ENCODE measurements at regions of chr12 and their contacts with region 1.

Region 1: DNA sequence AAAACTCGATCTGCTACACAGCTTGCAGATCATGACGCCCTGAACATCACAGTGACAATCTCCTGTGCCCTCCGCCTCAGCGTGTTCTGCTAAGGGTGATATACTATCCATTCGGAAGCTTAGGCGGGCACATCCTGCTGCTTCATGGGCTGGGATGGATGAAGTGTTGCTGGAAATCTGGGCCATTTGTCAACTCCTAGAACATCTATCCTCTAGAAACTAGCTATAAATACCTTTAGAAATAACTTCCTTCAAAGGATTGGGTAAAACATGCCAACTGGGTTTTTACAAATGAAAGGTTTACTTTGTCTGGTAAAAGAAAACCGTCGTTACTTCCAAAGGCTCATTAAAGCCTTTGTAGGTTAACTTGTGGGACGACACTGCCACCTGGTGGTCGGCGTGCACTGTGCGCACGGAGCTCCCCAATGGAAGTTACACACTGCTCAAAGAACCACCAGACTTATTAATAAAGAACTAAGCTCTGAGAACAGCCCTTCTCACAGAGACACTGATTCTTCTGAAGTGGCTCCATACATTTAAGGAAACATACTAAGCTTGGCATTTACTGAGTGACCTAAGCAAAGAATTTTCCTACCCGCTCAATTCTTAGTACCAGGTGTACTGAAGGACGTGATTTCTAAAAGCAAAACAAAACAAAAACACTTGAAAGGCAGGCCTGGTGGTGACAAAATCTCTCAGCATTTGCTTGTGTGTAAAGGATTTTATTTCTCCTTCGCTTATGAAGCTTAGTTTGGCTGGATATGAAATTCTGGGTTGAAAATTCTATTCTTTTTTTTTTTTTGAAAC is 21.6 kb upstream of the CACNA2D4 start:
- DNase-seq: peak; percentile 45
- ATAC-seq: peak; percentile 99
- H3K4me3 ChIP-seq: no peak overlapping the region
- H3K27ac ChIP-seq: no peak overlapping the region
- H3K4me1 ChIP-seq: no peaks in the 10 kb centered on the region
- H3K27me3 ChIP-seq: no peaks in the 10 kb centered on the region
- CTCF ChIP-seq: peak; percentile 87 to 93 (median 92); a peak in 5 of 6 replicates
- EP300 ChIP-seq: no peak
- POLR2A ChIP-seq: no peak
- RAD21 ChIP-seq: peak; percentile 94

Region 2: DNA sequence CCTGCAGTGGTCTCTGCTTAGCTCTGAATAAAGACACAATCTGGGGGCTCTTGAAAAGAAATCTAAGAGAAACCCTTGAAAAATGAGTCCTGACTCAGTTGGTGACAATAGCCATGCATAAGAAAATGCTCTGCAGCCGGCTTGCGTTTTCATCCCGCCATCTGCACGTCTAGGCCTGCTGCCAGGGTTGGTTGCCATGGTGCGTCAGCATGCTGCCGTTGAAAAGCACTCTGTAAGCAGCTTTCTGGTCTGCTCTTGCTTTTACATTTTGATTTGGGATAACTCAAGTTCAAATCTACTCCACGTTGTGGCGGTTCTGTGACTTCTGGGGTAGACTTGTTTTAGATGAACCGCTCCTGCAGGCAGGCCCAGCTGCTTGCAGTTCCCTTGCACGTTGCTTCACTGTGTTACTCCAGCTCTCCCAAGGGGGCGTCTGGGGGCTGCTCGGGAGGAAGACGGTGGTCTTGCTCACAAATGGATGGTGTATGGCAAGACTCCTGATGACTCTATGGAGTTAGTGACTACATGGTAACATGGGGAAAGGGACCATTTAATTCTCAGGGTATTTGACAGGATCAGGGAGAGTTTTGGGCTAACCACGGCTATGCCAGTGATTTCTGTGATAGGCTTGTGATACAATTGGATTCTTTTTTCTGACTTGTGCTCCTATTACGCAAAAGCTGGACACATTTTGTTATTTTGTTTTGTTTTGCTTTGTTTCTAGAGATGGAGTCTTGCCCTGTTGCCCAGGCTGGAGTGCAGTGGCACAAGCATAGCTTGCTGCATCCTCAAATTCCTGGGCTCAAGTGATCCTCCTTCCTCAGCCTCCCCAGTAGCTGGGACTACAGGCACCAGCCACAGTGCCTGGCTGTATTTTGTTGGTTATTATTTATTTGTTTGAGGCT is 295.2 kb before region 1 on chr12:
- CTCF ChIA-PET with region 1: interaction called, 21 read pairs
- POLR2A ChIA-PET with region 1: no interaction called
- RAD21 ChIA-PET with region 1: interaction called, 12 read pairs
- SMC1A ChIA-PET with region 1: interaction called, 9 read pairs
- in situ Hi-C with region 1: loop called (anchors 5 kb)
- intact Hi-C with region 1: no loop called
- DNase-seq: no peak
- ATAC-seq: no peak
- H3K4me3 ChIP-seq: no peak overlapping the region
- H3K27ac ChIP-seq: no peak overlapping the region
- H3K4me1 ChIP-seq: no peaks in the 10 kb centered on the region
- H3K27me3 ChIP-seq: no peaks in the 10 kb centered on the region
- CTCF ChIP-seq: no peak
- EP300 ChIP-seq: no peak
- POLR2A ChIP-seq: no peak
- RAD21 ChIP-seq: no peak

Region 3: DNA sequence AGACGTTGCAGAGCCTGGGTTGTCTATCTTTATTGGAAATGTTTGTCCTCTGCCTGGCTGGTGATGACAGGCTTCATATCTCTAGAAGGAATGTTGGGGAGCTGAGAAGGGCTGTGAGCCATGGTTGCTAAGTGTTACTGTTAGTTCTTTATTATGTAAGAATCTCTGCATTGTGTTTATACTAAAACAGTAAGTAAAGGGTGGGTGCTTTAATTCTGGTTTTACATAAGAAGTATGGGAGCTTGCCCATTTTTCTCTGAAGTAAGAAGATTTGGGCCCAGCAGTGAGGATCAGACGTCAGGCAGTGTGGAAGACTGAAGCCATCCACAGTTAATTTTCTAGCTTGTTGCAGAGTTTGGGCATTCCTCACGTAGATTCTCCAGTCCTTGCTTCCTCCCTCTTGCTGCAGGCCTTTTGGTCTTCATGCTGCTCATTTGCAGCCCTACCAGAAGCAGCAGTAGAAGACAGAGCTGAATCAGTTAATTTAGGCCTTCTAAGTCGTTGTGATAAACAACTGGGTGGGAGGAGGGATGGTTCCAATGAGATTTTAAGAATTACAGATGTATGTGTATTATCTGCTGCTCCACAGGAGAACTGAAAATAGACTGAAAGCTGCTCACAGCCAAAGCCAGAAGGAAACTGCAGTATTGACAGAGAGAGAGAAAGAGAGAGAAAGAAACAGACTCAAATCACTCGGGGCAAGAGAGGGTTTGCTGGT is 289.6 kb before region 1 on chr12:
- CTCF ChIA-PET with region 1: interaction called, 32 read pairs
- POLR2A ChIA-PET with region 1: no interaction called
- RAD21 ChIA-PET with region 1: interaction called, 38 read pairs
- SMC1A ChIA-PET with region 1: interaction called, 25 read pairs
- in situ Hi-C with region 1: loop called (anchors 5 kb)
- intact Hi-C with region 1: loop called (anchors 1 kb)
- DNase-seq: no peak
- ATAC-seq: no peak
- H3K4me3 ChIP-seq: no peak overlapping the region
- H3K27ac ChIP-seq: no peak overlapping the region
- H3K4me1 ChIP-seq: no peaks in the 10 kb centered on the region
- H3K27me3 ChIP-seq: no peaks in the 10 kb centered on the region
- CTCF ChIP-seq: no peak
- EP300 ChIP-seq: no peak
- POLR2A ChIP-seq: no peak
- RAD21 ChIP-seq: no peak

Region 4: DNA sequence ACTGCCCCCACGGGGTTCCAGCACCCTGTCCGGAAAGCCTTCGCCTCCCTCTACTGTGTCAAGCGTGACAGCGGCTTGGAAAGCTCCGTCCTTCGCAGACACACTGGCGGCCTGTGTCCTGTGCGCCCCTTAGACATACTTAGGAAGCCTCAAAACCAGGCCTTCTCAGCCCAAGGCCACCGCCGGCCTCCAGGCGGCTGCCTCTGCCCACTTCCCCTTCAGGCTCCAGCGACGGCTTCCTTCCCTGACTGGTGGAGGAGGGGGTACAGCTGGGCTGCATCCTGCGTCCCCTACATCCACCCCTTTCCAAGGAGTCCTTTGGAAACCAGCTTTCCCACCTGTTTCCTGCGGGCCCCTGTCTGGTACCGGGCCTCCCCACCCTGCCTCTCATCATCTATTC is 19.0 kb before region 1 on chr12:
- CTCF ChIA-PET with region 1: interaction called, 43 read pairs
- POLR2A ChIA-PET with region 1: no interaction called
- RAD21 ChIA-PET with region 1: interaction called, 20 read pairs
- SMC1A ChIA-PET with region 1: interaction called, 10 read pairs
- in situ Hi-C with region 1: no loop called
- intact Hi-C with region 1: no loop called
- DNase-seq: no peak
- ATAC-seq: no peak
- H3K4me3 ChIP-seq: no peak overlapping the region
- H3K27ac ChIP-seq: no peak overlapping the region
- H3K4me1 ChIP-seq: peaks cover 8% of the 10 kb centered on the region; the same call in 1 of the 2 replicates
- H3K27me3 ChIP-seq: peaks cover 0 to 6% of the 10 kb centered on the region in 2 experiments; a peak in 2 of 4 replicates
- CTCF ChIP-seq: no peak
- EP300 ChIP-seq: no peak
- POLR2A ChIP-seq: no peak
- RAD21 ChIP-seq: no peak

Region 5: DNA sequence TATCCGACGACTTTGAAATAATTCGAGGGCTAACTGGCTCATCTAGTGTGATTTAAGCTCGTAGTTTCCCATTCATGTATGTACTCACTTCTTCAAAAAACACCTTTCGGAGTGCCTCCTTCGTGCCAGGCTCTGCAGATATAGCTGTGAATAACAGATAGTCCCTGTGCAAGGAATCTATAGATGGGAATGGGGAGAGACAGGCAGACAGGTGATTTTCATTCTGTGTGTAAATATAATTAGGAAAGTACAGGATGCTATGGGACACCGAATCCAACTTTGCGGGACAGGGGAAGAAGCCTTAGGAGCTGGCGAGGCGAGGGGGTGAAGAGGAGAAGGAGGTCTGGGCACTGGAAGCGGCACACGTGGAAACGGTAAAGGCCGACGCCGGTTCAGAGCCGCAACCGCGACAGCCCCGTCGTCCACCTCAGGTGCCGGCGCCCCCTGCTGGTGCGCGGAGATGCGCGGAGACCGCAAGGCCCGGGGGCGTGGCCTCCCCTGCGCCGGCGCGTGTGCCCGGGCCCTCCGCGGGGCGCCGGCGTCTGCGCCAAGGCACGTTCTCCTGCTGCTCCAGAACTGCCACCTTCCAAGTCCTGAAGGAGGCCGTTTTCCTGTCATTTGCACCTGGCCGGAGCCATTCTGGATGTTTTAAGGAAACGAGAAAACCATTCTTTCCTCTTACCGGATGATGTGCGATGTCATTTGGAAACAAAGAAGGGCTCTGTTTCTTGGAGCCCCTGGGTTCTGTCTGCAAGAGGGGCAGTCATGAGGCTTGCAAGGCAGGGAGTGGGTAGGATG is 94.8 kb after region 1 on chr12:
- CTCF ChIA-PET with region 1: interaction called, 19 read pairs
- POLR2A ChIA-PET with region 1: interaction called, 4 read pairs
- RAD21 ChIA-PET with region 1: interaction called, 6 read pairs
- SMC1A ChIA-PET with region 1: interaction called, 27 read pairs
- in situ Hi-C with region 1: no loop called
- intact Hi-C with region 1: loop called (anchors 5 kb)
- DNase-seq: peak; percentile 12
- ATAC-seq: peak; percentile 100
- H3K4me3 ChIP-seq: peak overlapping the region; percentile 34; the same call in 1 of the 2 replicates
- H3K27ac ChIP-seq: no peak overlapping the region
- H3K4me1 ChIP-seq: 0 out of 2 replicates have a peak, but pooled peaks cover 3% of the 10 kb centered on the region
- H3K27me3 ChIP-seq: peaks cover 3 to 6% of the 10 kb centered on the region in 2 experiments
- CTCF ChIP-seq: peak; percentile 85 to 93 (median 86)
- EP300 ChIP-seq: no peak
- POLR2A ChIP-seq: peak; percentile 40; the same call in 1 of the 2 replicates
- RAD21 ChIP-seq: peak; percentile 69

Measured in GM12878 (cell line).